Posterior vena cava (tissue), 2 donors: ENCODE measurements at regions of chr7 and their contacts with region 1.

Region 1: DNA sequence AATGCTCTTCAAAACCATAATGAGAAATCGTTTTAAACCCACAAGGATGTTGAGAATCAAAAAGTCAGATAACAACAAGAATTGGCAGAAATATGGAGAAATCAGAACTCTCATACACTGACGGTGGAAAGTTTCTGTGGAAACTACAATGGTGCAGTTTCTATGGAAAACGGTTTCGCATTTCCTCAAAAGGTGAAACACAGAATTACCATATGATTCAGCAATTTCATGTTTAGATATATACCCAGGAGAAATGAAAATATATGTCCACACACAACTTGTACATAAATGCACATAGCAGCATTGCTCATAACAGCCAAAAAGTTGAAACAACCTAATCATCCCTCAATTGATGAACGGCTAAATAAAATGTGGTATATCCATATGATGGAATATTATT is 218.2 kb downstream of the ARL4A start:
- DNase-seq: no peak

Region 2: DNA sequence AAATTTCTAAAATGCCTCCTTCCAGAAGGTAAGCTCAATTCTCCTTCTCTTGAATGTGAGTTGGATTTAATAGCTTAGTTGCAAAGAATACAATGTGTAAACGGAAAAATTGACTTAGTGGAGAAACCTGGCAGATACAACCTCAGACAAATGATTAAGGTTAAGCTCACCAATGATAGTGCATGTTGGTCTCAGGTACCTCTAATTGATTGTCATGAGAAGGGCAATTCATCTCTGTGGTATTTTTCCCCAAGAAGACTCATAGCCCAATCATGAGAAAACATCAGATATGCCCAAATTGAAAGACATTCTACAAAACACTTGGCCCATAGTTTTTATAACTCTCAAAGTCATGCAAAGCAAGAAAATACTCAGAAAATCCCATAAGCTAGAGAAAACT is 730.7 kb before region 1 on chr7:
- intact Hi-C with region 1: no loop called
- DNase-seq: no peak

Region 3: GRCh38 chr7:12945929-12946328 is 40.3 kb after region 1 on chr7:
- intact Hi-C with region 1: loop called in 1 of 2 experiments (anchors 2 kb)
- DNase-seq: no peak